Gastrocnemius medialis (tissue), 4 donors: ENCODE measurements at regions of chr3 and their contacts with region 1.

Region 1: DNA sequence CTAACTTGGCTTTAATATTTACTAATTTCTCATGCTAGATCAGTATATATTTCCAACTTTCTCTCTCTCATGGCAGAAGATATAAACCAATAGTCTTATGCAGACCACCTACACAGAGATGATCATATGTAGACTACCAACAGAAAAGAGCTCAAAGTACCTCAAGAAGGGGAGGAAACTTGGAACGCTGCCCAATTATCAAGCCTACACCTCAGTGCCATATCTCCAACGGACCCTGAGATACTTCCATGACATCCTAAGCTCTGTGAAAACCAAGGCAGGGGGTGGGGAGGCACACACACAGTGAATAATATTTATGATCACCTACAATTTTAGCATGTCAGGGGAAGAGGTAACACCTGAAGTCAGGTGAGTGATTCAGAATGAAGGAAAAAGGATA is 100.6 kb downstream of the STAG1 start:
- DNase-seq: no peak
- ATAC-seq: no peak
- H3K4me3 ChIP-seq: no peak overlapping the region
- H3K27ac ChIP-seq: no peak overlapping the region
- H3K4me1 ChIP-seq: peaks cover 0 to 3% of the 10 kb centered on the region in 2 donors
- H3K27me3 ChIP-seq: no peaks in the 10 kb centered on the region
- CTCF ChIP-seq: no peak
- POLR2A ChIP-seq: no peak

Region 2: GRCh38 chr3:136685882-136686281 is 34.3 kb after region 1 on chr3:
- in situ Hi-C with region 1: no loop called
- intact Hi-C with region 1: loop called (anchors 5 kb)
- DNase-seq: no peak
- ATAC-seq: no peak
- H3K4me3 ChIP-seq: no peak overlapping the region
- H3K27ac ChIP-seq: no peak overlapping the region
- H3K4me1 ChIP-seq: peaks cover 0 to under 1% of the 10 kb centered on the region in 2 donors
- H3K27me3 ChIP-seq: no peaks in the 10 kb centered on the region
- CTCF ChIP-seq: no peak
- POLR2A ChIP-seq: no peak